ENCODE measurements at regions of chr14 and their contacts with region 1.

Region 1: GRCh38 chr14:93103392-93104080 is 12.2 kb downstream of the ITPK1 start:
- DNase-seq: no peak
- H3K4me3 ChIP-seq: no peak overlapping the region
- CTCF ChIP-seq: no peak

Region 2: GRCh38 chr14:93092606-93093556 is 10.7 kb before region 1 on chr14:
- CTCF ChIA-PET with region 1: interaction called, 10 read pairs
- POLR2A ChIA-PET with region 1: no interaction called
- DNase-seq: no peak
- H3K4me3 ChIP-seq: no peak overlapping the region
- CTCF ChIP-seq: no peak

Measured in AG04449 (cell line).